Activated CD8-positive, alpha-beta T cell treated with anti-CD3 and anti-CD28 coated beads for 36 hours (primary cell): ENCODE measurements at regions of chr11 and their contacts with region 1.

Region 1: DNA sequence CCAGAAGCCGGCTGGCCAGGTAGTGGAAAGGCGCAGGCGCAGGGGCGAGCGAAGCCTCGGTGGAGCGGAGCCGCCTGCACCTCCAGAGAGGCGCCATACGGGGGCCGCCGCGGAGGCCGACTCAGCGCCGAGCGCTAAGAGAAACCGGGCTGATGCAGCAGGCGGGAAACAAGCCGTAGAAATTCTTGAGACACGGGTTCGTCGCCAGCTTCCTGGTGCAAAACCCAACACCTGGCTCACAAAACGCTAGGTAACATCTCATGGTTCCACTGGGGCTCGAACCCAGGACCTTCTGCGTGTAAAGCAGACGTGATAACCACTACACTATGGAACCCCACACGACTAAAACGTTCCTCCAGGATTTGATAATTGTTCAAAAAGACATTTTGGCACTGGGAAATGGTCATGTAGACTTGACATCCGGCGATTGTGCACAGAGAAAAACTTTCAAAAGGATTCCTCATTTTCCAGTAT is 39.1 kb downstream of the OR4D9 start:
- DNase-seq: peak; percentile 96
- ATAC-seq: peak; percentile 92
- H3K4me3 Mint-ChIP-seq: peak overlapping the region; percentile 89
- H3K27ac Mint-ChIP-seq: peak overlapping the region; percentile 96
- H3K4me1 Mint-ChIP-seq: peaks cover 27% of the 10 kb centered on the region
- H3K27me3 Mint-ChIP-seq: peaks cover 5% of the 10 kb centered on the region
- CTCF ChIP-seq: peak; percentile 63

Region 2: GRCh38 chr11:59560702-59561469 is 10.5 kb after region 1 on chr11:
- CTCF ChIA-PET with region 1: interaction called, 10 read pairs
- POLR2A ChIA-PET with region 1: interaction called, 29 read pairs
- intact Hi-C with region 1: no loop called
- DNase-seq: peak; percentile 92
- ATAC-seq: peak; percentile 55
- H3K4me3 Mint-ChIP-seq: peak overlapping the region; percentile 90
- H3K27ac Mint-ChIP-seq: peak overlapping the region; percentile 95
- H3K4me1 Mint-ChIP-seq: peaks cover 35% of the 10 kb centered on the region
- H3K27me3 Mint-ChIP-seq: peaks cover 2% of the 10 kb centered on the region
- CTCF ChIP-seq: no peak

Region 3: DNA sequence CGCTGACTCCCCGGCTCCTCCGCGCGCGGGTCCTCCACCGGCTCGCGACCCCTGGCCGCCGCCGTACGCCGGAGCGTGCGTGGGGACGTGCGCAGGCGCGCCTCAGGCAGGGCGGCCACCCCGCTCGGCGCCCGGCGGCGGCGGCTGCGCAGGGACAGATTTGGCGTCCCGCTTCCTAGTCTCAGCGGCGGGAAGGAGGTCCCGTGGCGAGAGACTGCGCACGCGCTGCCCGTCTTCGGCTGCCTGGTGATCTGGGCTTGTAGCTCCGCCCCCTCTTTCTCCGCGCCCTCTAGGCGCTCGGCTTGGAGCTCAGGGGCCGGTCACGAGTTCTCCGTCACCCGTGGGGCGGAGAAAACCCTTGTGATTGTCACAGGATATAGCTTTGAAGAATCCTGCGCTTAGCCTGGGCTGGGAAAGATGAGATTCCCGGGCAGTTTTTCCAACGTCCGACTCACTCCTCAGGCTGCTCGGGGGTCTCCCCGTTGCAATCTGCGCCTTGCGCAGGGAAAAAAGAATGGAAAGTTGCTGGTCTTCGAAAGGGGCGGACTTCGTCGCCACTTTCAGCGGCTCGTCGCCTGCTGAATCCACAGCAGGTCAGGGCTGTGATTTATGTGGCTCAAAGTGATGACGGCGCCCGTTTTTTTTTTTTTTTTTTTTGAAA is 118.7 kb after region 1 on chr11 and contains the start of gene PATL1:
- CTCF ChIA-PET with region 1: interaction called, 5 read pairs
- POLR2A ChIA-PET with region 1: interaction called, 4 read pairs
- intact Hi-C with region 1: loop called (anchors 2 kb)
- DNase-seq: peak; percentile 99
- ATAC-seq: peak; percentile 94
- H3K4me3 Mint-ChIP-seq: peak within 1 kb of the TSS; percentile 88
- H3K27ac Mint-ChIP-seq: peak within 1 kb of the TSS; percentile 96
- H3K4me1 Mint-ChIP-seq: peaks cover 38% of the 10 kb centered on the region
- H3K27me3 Mint-ChIP-seq: no peaks in the 10 kb centered on the region
- CTCF ChIP-seq: no peak
- total RNA-seq, gene PATL1: 59.5 to 60.6 TPM